AG04450 (cell line): ENCODE measurements at regions of chr12 and their contacts with region 1.

Region 1: DNA sequence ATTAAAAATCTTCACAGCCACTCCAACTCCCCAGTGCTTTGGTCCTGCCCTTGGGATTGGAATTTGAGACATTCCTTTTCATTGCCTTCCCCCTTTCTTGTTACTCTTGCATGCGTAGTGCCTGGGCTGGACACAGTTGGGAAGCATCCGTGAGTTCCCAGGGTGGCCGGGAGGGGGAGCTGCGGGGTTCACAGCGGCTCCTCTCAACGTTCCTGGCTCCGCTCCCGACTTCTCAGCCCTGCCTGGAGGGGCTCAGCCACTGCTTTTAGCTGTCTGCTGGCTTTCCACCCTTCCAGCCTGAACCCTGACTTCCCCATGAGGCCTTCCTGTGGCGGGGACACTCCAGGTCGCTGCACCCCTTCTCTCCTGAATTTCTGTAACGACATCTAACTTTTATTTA is 3.2 kb downstream of the TEX52 start:
- DNase-seq: peak; percentile 56
- H3K4me3 ChIP-seq: no peak overlapping the region
- H3K27ac ChIP-seq: no peak overlapping the region
- H3K27me3 ChIP-seq: no peaks in the 10 kb centered on the region
- CTCF ChIP-seq: peak; percentile 93

Region 2: GRCh38 chr12:2836590-2836973 is 17.0 kb before region 1 on chr12:
- CTCF ChIA-PET with region 1: interaction called, 12 read pairs
- POLR2A ChIA-PET with region 1: interaction called, 3 read pairs
- DNase-seq: no peak
- H3K4me3 ChIP-seq: no peak overlapping the region
- H3K27ac ChIP-seq: no peak overlapping the region
- H3K27me3 ChIP-seq: no peaks in the 10 kb centered on the region
- CTCF ChIP-seq: no peak

Region 3: DNA sequence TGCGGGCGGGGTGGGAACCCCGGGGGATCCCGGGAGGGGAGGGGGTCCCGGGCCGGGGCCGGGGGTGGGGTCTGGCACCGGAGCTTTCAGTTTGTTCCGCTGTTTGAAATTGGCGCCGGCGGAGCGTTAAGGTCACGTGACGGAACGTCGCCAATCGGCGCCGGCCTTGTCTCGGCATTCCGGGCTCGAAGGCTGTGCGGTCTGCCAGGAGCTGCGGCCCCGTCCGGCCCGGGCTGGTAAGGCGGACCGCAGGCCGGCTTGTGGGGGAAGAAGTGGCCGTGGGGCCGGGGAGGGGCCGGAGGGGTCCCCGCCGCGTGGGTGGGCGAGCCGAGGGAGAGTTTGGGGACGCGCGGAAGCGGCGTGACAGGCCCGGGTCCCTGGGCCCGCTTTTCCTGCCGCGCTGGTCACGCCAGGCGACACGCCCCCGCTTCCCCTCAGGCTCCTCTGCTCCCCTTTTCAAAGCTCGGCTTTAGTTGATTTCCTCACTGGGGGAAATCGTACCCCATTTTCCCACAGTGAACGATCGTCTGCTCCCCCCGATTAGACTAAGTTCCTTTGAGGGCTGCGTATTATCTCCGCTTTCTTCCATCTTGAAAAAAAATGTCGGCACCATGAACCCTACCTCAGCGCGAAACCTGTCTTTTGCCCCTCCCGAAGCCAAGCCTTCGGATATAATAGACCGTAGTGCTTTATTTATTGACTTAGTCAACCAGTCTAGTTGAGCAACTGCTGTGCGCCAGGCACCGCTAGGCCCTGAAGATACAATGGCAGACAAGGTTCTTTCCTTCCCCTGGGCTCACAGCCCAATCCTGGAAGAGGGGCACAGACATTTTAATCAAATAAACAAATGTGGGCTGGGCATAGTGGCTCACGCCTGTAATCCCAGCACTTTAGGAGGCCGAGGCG is 23.7 kb after region 1 on chr12 and contains the starts of genes FOXM1 and RHNO1:
- CTCF ChIA-PET with region 1: interaction called, 11 read pairs
- POLR2A ChIA-PET with region 1: no interaction called
- DNase-seq: peak; percentile 66
- H3K4me3 ChIP-seq: peak within 1 kb of the TSS; percentile 82
- H3K27ac ChIP-seq: peak within 1 kb of the TSS; percentile 84
- H3K27me3 ChIP-seq: no peaks in the 10 kb centered on the region
- CTCF ChIP-seq: 0 out of 2 replicates have a peak, but pooled peaks have one; percentile 11
- polyA plus RNA-seq, gene FOXM1: 10.8 and 11.5 TPM in 2 replicates
- polyA plus RNA-seq, gene RHNO1: 42.0 and 43.4 TPM in 2 replicates

Region 4: DNA sequence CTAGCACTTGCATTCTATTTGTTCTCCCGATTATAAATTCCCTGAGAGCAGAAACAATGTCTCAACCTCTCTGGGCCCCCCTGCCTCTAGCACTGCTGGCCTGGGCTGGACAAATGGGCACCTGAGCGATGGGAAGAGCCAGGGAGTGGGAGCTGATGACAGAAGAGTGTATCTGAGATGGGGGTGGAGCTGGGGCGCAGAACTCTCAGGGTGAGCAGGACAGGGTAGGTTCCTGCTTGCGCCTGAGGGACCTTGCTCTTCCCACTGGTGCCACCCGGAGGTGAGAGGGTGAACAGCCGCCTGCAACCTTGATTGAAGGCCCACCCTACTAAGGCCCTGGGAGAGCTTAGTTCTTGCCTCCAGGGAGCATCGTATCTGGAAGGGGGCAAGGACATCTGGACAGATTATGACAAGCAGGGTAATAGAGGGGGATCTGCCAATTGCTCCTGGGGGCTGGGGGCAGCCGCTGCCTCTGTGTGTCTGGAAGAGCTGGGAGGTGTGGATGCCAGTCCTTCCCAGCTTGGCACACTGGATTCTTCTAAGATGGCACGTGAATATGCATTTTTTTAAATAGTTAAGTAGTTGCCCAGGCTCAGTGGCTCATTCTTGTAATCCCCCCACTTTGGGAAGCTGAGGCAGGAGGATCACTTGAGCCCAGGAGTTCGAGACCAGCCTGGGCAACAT is 180.6 kb after region 1 on chr12:
- CTCF ChIA-PET with region 1: interaction called, 10 read pairs
- POLR2A ChIA-PET with region 1: no interaction called
- DNase-seq: peak; percentile 44
- H3K4me3 ChIP-seq: no peak overlapping the region
- H3K27ac ChIP-seq: no peak overlapping the region
- H3K27me3 ChIP-seq: no peaks in the 10 kb centered on the region
- CTCF ChIP-seq: peak; percentile 88

Region 5: DNA sequence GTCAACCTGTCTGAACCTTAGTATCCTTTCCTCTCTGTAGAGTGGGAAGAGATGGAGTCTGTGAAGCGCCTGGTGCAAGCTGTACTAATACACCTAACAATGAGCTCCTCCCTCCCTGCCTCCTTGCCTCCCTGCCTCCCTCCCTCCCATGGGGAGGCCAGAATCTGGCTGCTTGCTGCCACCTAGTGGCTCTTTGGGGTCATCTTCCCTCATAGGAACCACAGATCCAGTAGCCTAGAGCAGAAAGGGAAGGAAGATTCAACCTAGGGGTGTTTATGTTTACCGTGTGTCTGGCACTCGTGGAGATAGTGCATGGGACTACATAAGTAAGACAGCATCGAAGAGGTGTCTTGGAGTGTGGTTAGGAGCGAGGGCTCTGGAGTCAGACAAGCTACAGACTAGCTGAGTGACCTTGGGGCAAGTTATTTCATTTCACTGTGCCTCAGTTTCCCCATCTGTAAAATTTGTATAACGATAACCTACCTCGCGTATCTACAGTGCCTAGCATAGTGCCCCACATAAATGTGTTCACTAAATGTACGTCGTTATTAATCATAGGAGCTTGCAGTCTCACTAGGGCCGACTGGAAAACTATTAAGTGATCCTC is 188.0 kb after region 1 on chr12:
- CTCF ChIA-PET with region 1: interaction called, 16 read pairs
- POLR2A ChIA-PET with region 1: no interaction called
- DNase-seq: peak; percentile 38
- H3K4me3 ChIP-seq: no peak overlapping the region
- H3K27ac ChIP-seq: no peak overlapping the region
- H3K27me3 ChIP-seq: no peaks in the 10 kb centered on the region
- CTCF ChIP-seq: peak; percentile 76

Region 6: GRCh38 chr12:3491938-3492792 is 638.5 kb after region 1 on chr12:
- CTCF ChIA-PET with region 1: no interaction called
- POLR2A ChIA-PET with region 1: no interaction called
- DNase-seq: peak; percentile 10
- H3K4me3 ChIP-seq: no peak overlapping the region
- H3K27ac ChIP-seq: no peak overlapping the region
- H3K27me3 ChIP-seq: peaks cover 57% of the 10 kb centered on the region
- CTCF ChIP-seq: no peak